Naive thymus-derived CD4-positive, alpha-beta T cell (primary cell): ENCODE measurements at regions of chr4 and their contacts with region 1.

Region 1: DNA sequence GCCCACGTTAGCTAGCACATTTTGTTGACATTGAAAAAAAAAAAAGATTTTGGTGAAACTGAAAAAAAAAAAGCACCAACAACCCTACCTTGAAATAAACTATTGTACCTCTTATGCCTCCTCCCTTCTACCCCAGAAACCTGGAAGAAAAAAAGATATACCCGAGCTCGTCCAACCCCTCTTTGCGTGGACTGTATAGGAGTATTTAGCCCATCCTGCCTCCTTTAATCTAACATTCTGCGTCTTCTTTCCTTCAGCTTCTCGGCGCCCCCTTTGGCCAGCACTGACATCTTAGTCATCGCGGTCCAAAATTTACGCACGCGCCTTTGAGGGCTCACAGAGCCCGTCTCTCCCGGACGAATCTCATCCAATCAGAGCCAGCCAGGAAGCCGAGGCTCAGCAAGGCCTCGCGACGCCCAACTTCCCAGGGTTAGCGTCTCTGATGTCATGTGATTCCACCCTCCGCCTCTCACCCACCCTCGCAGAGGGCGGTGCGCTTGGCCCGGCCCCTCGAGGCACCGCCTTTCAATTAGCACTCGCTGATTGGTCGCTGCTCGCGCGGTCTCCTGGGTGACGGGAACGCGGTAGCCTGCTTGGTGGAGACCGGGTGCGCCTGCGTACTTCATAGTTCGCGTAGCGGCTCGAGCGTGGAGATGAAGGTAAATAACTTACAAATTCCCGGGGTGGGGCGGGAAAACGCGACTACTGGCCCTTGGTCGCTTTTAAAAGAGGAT is at the start of gene WDR19:
- DNase-seq: peak; percentile 91 to 98 (median 98)
- ATAC-seq: peak; percentile 98
- H3K4me3 ChIP-seq: peak within 1 kb of the TSS; percentile 91
- H3K4me3 Mint-ChIP-seq: no peak within 1 kb of the TSS
- H3K27ac ChIP-seq: peak within 1 kb of the TSS; percentile 72
- H3K27ac Mint-ChIP-seq: peak within 1 kb of the TSS in 4 of 9 donors; percentile 8 to 47 (median 21)
- H3K4me1 ChIP-seq: peaks cover 3 to 12% of the 10 kb centered on the region in 2 donors
- H3K4me1 Mint-ChIP-seq: peaks cover 0 to 12% (median 9%) of the 10 kb centered on the region in 7 donors
- H3K27me3 ChIP-seq: no peaks in the 10 kb centered on the region
- H3K27me3 Mint-ChIP-seq: peaks cover 0 to 16% (median 3%) of the 10 kb centered on the region in 5 donors
- total RNA-seq, gene WDR19: 14.0 to 44.3 (median 15.4) TPM

Region 2: GRCh38 chr4:38154681-38155608 is 1027.1 kb before region 1 on chr4:
- CTCF ChIA-PET with region 1: no interaction called
- POLR2A ChIA-PET with region 1: no interaction called
- intact Hi-C with region 1: loop called in 1 of 2 experiments (anchors 10 kb)
- DNase-seq: no peak
- ATAC-seq: peak; percentile 57
- H3K4me3 ChIP-seq: no peak overlapping the region
- H3K4me3 Mint-ChIP-seq: peak overlapping the region in 9 of 10 donors; percentile 33 to 65 (median 53)
- H3K27ac ChIP-seq: no peak overlapping the region
- H3K27ac Mint-ChIP-seq: peak overlapping the region in 7 of 9 donors; percentile 38 to 71 (median 48)
- H3K4me1 ChIP-seq: peaks cover 10 to 25% of the 10 kb centered on the region in 2 donors
- H3K4me1 Mint-ChIP-seq: peaks cover 23 to 67% (median 52%) of the 10 kb centered on the region in 7 donors
- H3K27me3 ChIP-seq: no peaks in the 10 kb centered on the region
- H3K27me3 Mint-ChIP-seq: peaks cover 0 to 15% (median 0%) of the 10 kb centered on the region in 5 donors

Region 3: GRCh38 chr4:38856524-38857337 is 325.3 kb before region 1 on chr4 and contains the start of gene TLR6:
- CTCF ChIA-PET with region 1: no interaction called
- POLR2A ChIA-PET with region 1: no interaction called
- intact Hi-C with region 1: loop called in 1 of 2 experiments (anchors 1 kb)
- DNase-seq: peak in 8 of 9 donors; percentile 37 to 90 (median 83)
- ATAC-seq: peak; percentile 83
- H3K4me3 ChIP-seq: peak within 1 kb of the TSS; percentile 14
- H3K4me3 Mint-ChIP-seq: peak within 1 kb of the TSS in 9 of 10 donors; percentile 62 to 81 (median 67)
- H3K27ac ChIP-seq: peak within 1 kb of the TSS; percentile 49
- H3K27ac Mint-ChIP-seq: peak within 1 kb of the TSS; percentile 76 to 93 (median 90)
- H3K4me1 ChIP-seq: peaks cover 0 to 26% of the 10 kb centered on the region in 2 donors
- H3K4me1 Mint-ChIP-seq: peaks cover 28 to 52% (median 46%) of the 10 kb centered on the region in 7 donors
- H3K27me3 ChIP-seq: no peaks in the 10 kb centered on the region
- H3K27me3 Mint-ChIP-seq: peaks cover 0 to 6% (median 0%) of the 10 kb centered on the region in 5 donors
- total RNA-seq, gene TLR6: 1.00 to 8.8 (median 1.9) TPM

Region 4: GRCh38 chr4:38983787-38984598 is 198.1 kb before region 1 on chr4:
- CTCF ChIA-PET with region 1: no interaction called
- POLR2A ChIA-PET with region 1: no interaction called
- intact Hi-C with region 1: no loop called
- DNase-seq: no peak
- ATAC-seq: no peak
- H3K4me3 ChIP-seq: no peak overlapping the region
- H3K4me3 Mint-ChIP-seq: peak overlapping the region in 1 of 10 donors; percentile 67
- H3K27ac ChIP-seq: no peak overlapping the region
- H3K27ac Mint-ChIP-seq: peak overlapping the region in 3 of 9 donors; percentile 62 to 86 (median 64)
- H3K4me1 ChIP-seq: no peaks in the 10 kb centered on the region
- H3K4me1 Mint-ChIP-seq: peaks cover 5 to 72% (median 14%) of the 10 kb centered on the region in 7 donors
- H3K27me3 ChIP-seq: no peaks in the 10 kb centered on the region
- H3K27me3 Mint-ChIP-seq: no peaks in the 10 kb centered on the region

Region 5: DNA sequence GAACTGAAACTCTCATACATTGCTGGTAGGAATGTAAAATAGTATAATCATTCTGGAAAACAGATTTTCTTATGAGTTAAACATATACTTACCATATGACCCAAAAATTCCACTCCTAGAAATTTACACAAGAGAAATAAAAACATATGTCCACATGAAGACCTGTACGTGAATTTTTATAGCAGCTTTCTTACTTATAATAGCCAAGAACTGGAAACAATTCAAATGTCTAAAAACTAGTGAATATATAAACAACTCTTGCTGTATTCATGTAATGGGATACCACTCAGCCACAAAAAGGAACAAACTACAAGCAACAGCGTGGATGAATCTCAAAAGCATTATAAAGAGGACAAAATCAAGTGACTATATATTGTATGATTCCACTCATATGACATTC is 177.3 kb before region 1 on chr4:
- CTCF ChIA-PET with region 1: no interaction called
- POLR2A ChIA-PET with region 1: no interaction called
- intact Hi-C with region 1: no loop called
- DNase-seq: no peak
- ATAC-seq: no peak
- H3K4me3 ChIP-seq: no peak overlapping the region
- H3K4me3 Mint-ChIP-seq: no peak overlapping the region
- H3K27ac ChIP-seq: no peak overlapping the region
- H3K27ac Mint-ChIP-seq: no peak overlapping the region
- H3K4me1 ChIP-seq: no peaks in the 10 kb centered on the region
- H3K4me1 Mint-ChIP-seq: peaks cover 8 to 23% (median 13%) of the 10 kb centered on the region in 7 donors
- H3K27me3 ChIP-seq: no peaks in the 10 kb centered on the region
- H3K27me3 Mint-ChIP-seq: no peaks in the 10 kb centered on the region

Region 6: GRCh38 chr4:39044364-39044955 is 137.6 kb before region 1 on chr4:
- CTCF ChIA-PET with region 1: no interaction called
- POLR2A ChIA-PET with region 1: no interaction called
- intact Hi-C with region 1: loop called (anchors 1 kb)
- DNase-seq: peak; percentile 82 to 98 (median 89)
- ATAC-seq: peak; percentile 92
- H3K4me3 ChIP-seq: peak overlapping the region; percentile 68
- H3K4me3 Mint-ChIP-seq: peak overlapping the region; percentile 86 to 97 (median 91)
- H3K27ac ChIP-seq: peak overlapping the region; percentile 82
- H3K27ac Mint-ChIP-seq: peak overlapping the region; percentile 66 to 99 (median 93)
- H3K4me1 ChIP-seq: peaks cover 28 to 32% of the 10 kb centered on the region in 2 donors
- H3K4me1 Mint-ChIP-seq: peaks cover 17 to 63% (median 55%) of the 10 kb centered on the region in 7 donors
- H3K27me3 ChIP-seq: no peaks in the 10 kb centered on the region
- H3K27me3 Mint-ChIP-seq: no peaks in the 10 kb centered on the region

Region 7: GRCh38 chr4:39201963-39202362 is 19.9 kb after region 1 on chr4:
- CTCF ChIA-PET with region 1: no interaction called
- POLR2A ChIA-PET with region 1: no interaction called
- intact Hi-C with region 1: no loop called
- DNase-seq: no peak
- ATAC-seq: no peak
- H3K4me3 ChIP-seq: no peak overlapping the region
- H3K4me3 Mint-ChIP-seq: no peak overlapping the region
- H3K27ac ChIP-seq: no peak overlapping the region
- H3K27ac Mint-ChIP-seq: no peak overlapping the region
- H3K4me1 ChIP-seq: no peaks in the 10 kb centered on the region
- H3K4me1 Mint-ChIP-seq: no peaks in the 10 kb centered on the region
- H3K27me3 ChIP-seq: no peaks in the 10 kb centered on the region
- H3K27me3 Mint-ChIP-seq: no peaks in the 10 kb centered on the region

Region 8: GRCh38 chr4:39365830-39366771 is 184.0 kb after region 1 on chr4 and contains the start of gene RFC1:
- CTCF ChIA-PET with region 1: no interaction called
- POLR2A ChIA-PET with region 1: no interaction called
- intact Hi-C with region 1: loop called (anchors 1 to 2 kb)
- DNase-seq: peak; percentile 84 to 92 (median 91)
- ATAC-seq: peak; percentile 98
- H3K4me3 ChIP-seq: peak within 1 kb of the TSS; percentile 69
- H3K4me3 Mint-ChIP-seq: peak within 1 kb of the TSS; percentile 88 to 98 (median 94)
- H3K27ac ChIP-seq: peak within 1 kb of the TSS; percentile 84
- H3K27ac Mint-ChIP-seq: peak within 1 kb of the TSS; percentile 72 to 97 (median 92)
- H3K4me1 ChIP-seq: peaks cover 12 to 19% of the 10 kb centered on the region in 2 donors
- H3K4me1 Mint-ChIP-seq: peaks cover 33 to 59% (median 41%) of the 10 kb centered on the region in 7 donors
- H3K27me3 ChIP-seq: no peaks in the 10 kb centered on the region
- H3K27me3 Mint-ChIP-seq: no peaks in the 10 kb centered on the region
- total RNA-seq, gene RFC1: 62.4 to 66.4 (median 64.3) TPM

Region 9: DNA sequence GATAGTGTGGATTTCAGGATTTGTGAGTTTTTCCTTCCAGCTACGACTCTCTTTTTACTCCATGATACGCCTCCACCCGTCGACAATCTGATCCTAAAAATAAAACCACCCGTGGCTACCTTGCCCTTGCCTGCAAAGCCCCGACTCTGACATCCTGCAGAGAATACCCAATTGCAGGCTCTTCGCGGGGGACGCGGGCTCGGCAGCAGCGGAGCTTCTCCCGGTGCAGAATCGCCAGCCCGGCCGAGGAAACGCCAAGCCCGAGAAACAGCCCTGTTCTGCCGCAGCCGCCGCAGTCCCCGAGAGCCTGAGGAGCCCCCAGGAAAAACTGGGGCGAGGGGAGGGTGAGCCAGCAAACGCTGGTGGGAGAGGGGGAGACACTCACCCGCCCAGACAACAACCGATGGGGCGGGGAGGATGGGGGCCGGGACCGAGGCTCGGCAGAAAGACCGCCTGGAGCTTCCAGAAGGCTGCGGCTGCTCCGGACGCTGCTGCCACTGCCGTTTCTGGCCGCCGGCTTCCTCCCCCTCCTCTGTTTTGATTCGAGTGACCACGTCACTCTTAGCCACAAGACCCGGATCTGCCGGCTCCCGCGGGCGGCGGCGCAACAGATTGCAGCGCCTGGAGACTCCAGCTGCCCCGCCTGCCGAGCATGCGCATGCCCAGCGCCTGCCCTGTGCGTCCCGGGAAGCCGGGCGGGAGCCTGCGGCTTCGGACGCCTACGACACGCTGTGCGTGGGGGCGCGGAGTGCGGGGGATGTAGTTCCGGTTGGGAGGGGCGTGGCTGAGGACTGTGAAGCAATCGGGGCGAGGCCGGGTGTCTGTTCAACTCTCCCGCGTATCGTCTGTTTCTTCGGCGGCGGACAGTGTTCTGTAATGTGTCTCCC is 456.5 kb after region 1 on chr4 and contains the start of gene SMIM14:
- CTCF ChIA-PET with region 1: no interaction called
- POLR2A ChIA-PET with region 1: no interaction called
- intact Hi-C with region 1: loop called (anchors 1 to 5 kb)
- DNase-seq: peak; percentile 69 to 96 (median 82)
- ATAC-seq: peak; percentile 92
- H3K4me3 ChIP-seq: peak within 1 kb of the TSS; percentile 77
- H3K4me3 Mint-ChIP-seq: peak within 1 kb of the TSS; percentile 86 to 97 (median 94)
- H3K27ac ChIP-seq: peak within 1 kb of the TSS; percentile 79
- H3K27ac Mint-ChIP-seq: peak within 1 kb of the TSS; percentile 67 to 96 (median 86)
- H3K4me1 ChIP-seq: peaks cover 12 to 13% of the 10 kb centered on the region in 2 donors
- H3K4me1 Mint-ChIP-seq: peaks cover 22 to 51% (median 44%) of the 10 kb centered on the region in 7 donors
- H3K27me3 ChIP-seq: no peaks in the 10 kb centered on the region
- H3K27me3 Mint-ChIP-seq: peaks cover 0 to 27% (median 0%) of the 10 kb centered on the region in 5 donors
- total RNA-seq, gene SMIM14: 4.6 to 15.1 (median 12.9) TPM